ENCODE measurements at regions of chr3 and their contacts with region 1.

Region 1: DNA sequence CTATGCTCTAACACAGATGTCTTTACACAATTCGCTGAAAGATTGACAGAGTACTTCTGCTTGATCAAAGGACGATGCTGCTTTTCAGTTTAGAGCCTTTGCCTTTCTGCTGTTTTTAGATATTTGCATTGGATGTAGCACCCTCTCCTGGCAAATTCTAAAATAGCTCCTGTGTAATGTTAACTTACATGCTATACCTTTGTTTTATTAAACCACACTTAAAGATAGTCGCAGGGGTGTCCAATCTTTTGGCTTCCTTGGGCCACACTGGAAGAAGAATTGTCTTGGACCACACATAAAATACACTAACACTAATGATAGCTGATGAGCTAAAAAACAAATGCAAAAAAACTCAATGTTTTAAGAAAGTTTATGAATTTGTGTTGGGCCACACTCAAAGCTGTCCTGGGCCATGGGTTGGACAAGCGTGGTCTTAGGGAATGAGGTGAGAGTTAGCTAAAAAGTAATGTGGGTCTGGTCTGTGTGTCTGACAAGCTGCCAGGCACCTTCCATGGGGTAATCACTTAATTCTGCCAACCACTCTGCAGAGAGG is 62.9 kb downstream of the ATG7 start:
- DNase-seq: peak; percentile 62
- CTCF ChIP-seq: peak; percentile 68

Region 2: DNA sequence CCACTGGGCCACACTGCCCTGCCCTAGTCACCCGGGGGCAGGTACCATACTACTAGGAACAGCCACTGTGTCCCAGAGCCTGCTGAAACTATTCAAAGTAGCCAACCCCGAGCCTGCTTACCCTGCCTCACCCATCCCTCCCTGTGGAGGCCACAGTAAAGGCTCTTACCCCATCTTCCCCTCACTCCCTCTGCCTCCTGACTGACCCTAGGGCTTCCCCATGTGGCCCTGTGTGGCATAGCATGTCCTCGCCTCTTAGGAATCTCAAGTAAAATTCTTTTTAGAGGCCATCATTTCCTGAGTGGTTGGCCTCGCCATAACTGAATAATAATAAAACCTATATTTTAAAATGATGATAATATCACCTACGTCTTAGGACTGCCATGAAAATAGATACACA is 631.3 kb before region 1 on chr3:
- CTCF ChIA-PET with region 1: no interaction called
- POLR2A ChIA-PET with region 1: no interaction called
- DNase-seq: no peak
- CTCF ChIP-seq: no peak

Region 3: DNA sequence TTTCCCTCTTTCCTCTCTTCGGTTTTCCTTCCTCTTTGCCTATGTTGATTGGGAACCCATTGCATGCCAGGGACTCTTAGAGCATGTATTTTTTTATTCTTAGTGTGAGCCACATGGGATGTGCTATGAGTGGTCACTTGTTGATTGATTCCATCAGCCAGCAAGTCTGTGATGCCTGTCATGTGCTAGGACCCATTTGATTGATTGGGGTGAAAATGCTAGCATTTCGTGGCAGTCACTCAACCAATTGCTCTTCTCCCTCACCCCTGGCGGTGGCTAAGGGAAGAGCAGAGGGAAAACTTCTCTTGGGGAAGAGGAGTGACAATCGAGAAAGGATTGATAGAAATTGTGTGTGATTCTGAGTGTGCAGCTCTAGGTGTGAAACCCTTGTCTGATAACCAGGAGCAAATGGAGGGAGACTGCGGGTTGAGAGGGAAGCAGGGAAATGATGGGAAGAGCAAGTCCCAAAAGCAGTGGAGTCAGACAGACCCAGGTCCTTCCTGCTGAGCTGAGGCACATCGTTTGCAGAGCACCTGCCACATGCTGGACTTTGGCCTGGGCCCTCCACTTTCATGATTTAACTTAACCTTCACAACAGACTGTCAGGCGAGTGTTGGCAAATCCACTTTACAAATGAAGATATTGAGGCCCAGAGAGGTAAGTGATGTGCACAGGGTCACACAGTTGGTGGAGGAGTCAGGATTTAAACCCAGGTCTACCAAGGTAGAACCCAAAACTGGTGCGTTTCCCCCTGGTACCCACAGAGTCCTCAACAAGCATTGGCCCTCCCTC is 479.1 kb before region 1 on chr3:
- CTCF ChIA-PET with region 1: no interaction called
- POLR2A ChIA-PET with region 1: no interaction called
- DNase-seq: no peak
- CTCF ChIP-seq: no peak

Region 4: GRCh38 chr3:10945683-10946287 is 389.3 kb before region 1 on chr3:
- CTCF ChIA-PET with region 1: interaction called, 11 read pairs
- POLR2A ChIA-PET with region 1: no interaction called
- DNase-seq: peak; percentile 79
- CTCF ChIP-seq: peak; percentile 86

Region 5: GRCh38 chr3:11236595-11237461 is 98.3 kb before region 1 on chr3:
- CTCF ChIA-PET with region 1: interaction called, 101 read pairs
- POLR2A ChIA-PET with region 1: no interaction called
- DNase-seq: peak; percentile 73
- CTCF ChIP-seq: peak; percentile 66

Region 6: DNA sequence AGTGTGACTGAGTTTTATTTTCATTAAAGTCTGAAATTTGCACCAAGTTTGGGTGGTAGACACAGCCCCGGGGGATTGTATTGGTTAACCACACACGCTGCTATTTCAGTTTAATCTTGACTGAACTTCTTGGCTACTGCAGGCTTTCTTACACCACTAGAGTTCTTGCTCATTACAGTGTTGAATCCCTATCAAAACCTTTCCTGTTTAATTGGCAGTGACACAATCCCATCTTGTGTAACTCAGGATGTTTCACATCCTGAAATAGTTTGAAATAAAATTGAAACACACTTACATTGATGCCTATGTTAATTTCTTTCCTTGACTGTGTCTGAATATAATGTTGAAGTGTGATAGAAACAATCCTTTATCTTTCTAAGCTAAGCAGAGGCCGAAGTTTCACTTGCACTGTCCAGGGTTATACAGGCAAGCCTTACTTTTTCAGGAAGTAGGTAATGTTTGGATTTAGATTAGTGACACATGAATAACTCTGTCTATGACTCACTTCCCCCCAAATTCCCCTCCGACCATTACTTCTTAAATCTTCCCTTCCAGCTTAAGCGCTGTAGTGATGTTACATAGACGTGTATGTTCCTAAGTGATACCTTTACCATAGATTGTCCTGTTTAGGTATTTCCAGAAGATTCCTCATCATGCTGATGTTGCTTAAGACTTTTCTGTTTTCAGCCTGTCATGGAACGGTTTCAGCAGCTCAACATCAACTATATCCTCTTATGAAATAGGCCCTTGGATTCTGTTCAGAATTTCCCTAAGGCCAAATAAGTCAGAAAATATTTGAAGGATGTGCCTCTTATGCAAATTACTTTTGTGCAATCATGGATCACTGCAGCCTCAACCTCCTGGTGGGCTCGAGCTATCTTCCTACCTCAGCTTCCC is 46.1 kb before region 1 on chr3:
- CTCF ChIA-PET with region 1: interaction called, 14 read pairs
- POLR2A ChIA-PET with region 1: no interaction called
- DNase-seq: peak; percentile 44
- CTCF ChIP-seq: no peak

Region 7: DNA sequence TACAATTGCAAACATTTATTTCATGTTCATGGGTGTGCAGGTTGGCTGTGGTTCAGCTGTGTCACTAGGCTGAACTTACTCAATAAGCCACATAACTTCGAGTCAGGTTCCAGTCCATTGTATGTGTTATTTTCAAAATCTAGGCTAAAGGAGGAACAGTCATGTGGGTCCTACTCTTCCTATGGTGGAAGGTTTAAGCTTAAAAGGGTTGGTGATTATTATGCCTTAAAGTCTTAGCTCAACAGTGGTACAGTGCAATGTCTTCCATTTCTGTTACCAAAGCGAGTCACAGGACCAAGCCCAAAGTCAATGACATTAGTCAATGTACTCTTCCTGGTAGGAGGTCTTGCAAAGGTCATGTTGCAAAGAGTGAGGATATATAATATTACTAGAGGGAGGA is 15.2 kb after region 1 on chr3:
- CTCF ChIA-PET with region 1: interaction called, 28 read pairs
- POLR2A ChIA-PET with region 1: no interaction called
- DNase-seq: no peak
- CTCF ChIP-seq: no peak

Region 8: GRCh38 chr3:11392014-11392859 is 57.1 kb after region 1 on chr3:
- CTCF ChIA-PET with region 1: no interaction called
- POLR2A ChIA-PET with region 1: no interaction called
- DNase-seq: no peak
- CTCF ChIP-seq: no peak

Measured in GM10248 (cell line).